Testis (tissue), 5 donors: ENCODE measurements at regions of chr11 and their contacts with region 1.

Region 1: DNA sequence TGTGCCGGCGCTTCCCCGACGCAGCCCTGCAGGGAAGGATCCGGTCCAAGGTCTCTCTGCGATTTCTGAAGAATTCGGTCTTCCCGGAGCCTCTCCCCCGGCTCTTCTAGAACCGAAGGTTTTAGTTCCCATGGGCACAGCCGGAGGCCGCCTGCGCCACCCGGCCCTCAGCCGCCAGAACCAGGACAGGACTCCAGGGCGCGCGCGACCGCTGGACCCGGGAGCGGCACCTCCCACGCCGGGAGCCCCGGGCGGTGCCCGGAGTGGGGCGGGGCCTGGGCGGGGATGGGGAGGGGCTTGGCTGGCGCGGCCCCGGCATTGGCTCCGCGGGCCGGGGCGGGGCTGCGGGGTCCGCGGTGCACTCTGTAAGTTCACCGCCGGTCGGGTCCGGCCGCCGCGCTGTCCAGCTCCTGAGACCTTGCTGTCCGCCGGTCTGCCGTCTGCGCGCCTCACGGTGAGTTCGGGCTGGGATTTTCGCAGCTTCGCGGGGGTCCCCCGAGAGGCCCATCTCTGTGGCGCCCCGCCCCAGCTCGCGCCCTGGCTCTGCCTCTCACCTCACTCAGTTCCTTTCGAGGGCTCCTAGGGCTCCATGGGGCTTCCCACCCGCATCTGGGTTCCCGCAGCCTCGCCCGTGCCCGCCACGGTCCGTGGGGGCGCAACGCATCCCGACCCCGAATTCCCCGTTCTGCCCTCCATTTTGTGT is at the start of gene CDC42EP2:
- DNase-seq: peak; percentile 88
- H3K4me3 ChIP-seq: peak within 1 kb of the TSS; percentile 69 to 95
- H3K27ac ChIP-seq: peak within 1 kb of the TSS; percentile 64 to 81
- H3K4me1 ChIP-seq: peaks cover 24% of the 10 kb centered on the region
- H3K27me3 ChIP-seq: no peaks in the 10 kb centered on the region
- CTCF ChIP-seq: peak in 1 of 3 experiments; percentile 8
- POLR2A ChIP-seq: no peak
- total RNA-seq, gene CDC42EP2: 3.5 to 4.4 TPM

Region 2: GRCh38 chr11:65243773-65244172 is 70.9 kb before region 1 on chr11:
- intact Hi-C with region 1: no loop called
- DNase-seq: no peak
- H3K4me3 ChIP-seq: no peak overlapping the region
- H3K27ac ChIP-seq: no peak overlapping the region
- H3K4me1 ChIP-seq: no peaks in the 10 kb centered on the region
- H3K27me3 ChIP-seq: no peaks in the 10 kb centered on the region
- CTCF ChIP-seq: no peak
- POLR2A ChIP-seq: no peak

Region 3: DNA sequence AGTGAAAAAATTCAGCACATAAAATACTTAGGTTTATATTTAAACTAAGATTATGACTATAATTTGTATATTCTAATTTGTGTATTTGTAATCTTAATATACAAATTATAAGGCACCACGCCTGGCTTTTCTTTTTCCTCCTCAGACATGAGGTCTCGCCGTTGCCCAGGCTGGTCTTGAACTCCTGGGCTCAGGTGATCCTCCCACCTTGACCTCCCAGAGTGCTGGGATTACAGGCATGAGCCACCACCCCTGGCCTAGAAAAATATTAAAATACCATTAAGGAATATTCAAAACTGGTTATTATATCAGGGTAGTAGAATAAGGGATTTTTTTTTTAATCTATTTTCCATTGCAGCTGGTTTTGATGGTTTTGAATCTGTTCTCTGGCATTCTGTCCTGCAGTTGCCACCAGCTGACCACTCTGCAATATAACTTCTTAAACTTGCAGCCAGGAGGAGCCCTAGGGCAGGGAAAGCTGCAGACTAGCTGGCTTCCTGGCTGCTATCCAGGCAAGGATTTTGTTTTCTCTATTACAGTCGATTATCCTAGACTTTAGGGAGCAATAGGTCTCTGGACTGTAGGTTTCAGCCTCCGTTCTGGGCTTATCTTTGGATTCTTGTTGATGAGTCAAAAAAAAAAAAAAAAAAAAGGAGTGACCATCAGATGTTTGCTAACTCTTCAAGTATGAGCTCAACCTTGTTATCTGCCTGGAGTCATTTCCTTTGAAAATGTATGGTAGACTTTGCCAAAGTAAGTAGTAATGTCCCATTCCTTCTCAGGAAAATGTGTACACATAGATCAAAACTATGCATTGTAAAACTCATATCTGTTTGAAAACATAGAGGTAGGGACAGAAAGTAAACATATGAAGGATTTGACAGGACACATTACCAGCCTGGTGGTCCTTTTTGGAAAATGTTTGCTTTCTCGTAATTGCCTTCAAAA is 39.6 kb before region 1 on chr11:
- intact Hi-C with region 1: loop called (anchors 5 kb)
- DNase-seq: peak; percentile 88
- H3K4me3 ChIP-seq: no peak overlapping the region
- H3K27ac ChIP-seq: no peak overlapping the region
- H3K4me1 ChIP-seq: no peaks in the 10 kb centered on the region
- H3K27me3 ChIP-seq: no peaks in the 10 kb centered on the region
- CTCF ChIP-seq: peak; percentile 62 to 91 (median 89)
- POLR2A ChIP-seq: no peak